ENCODE measurements at regions of chr2 and their contacts with region 1.

Region 1: DNA sequence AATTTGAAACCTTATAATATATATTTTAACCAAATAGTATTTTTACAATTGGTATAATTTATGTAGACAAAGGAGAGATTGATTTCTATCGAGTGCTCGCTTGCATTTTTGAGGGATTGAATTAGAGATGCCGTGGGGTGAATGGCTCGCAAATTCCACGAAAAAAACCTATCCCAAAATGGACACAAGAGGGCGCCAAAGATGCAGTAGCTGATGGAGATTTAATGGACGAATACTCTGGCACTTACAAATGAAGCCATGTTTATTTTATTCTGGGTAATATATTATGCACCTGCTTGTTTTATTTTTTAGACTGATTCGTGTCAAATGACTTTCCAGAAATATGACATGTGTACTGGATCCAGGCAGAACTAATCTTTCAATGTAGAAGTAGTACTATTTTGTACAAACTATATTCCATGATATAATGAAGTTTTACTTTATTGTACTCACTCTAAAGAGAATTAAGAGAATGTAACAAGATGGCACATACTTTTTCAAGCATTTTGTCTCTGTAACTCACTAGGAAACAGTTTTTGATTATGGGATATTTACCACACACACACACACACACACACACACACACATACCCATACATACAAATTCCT is 505.4 kb downstream of the PLCL1 start:
- DNase-seq: peak; percentile 54
- CTCF ChIP-seq: peak; percentile 77

Region 2: GRCh38 chr2:198322294-198322693 is 12.5 kb after region 1 on chr2:
- CTCF ChIA-PET with region 1: interaction called, 15 read pairs
- POLR2A ChIA-PET with region 1: no interaction called
- DNase-seq: no peak
- CTCF ChIP-seq: no peak

Region 3: GRCh38 chr2:198337368-198337767 is 27.6 kb after region 1 on chr2:
- CTCF ChIA-PET with region 1: interaction called, 18 read pairs
- POLR2A ChIA-PET with region 1: no interaction called
- DNase-seq: no peak
- CTCF ChIP-seq: no peak

Region 4: DNA sequence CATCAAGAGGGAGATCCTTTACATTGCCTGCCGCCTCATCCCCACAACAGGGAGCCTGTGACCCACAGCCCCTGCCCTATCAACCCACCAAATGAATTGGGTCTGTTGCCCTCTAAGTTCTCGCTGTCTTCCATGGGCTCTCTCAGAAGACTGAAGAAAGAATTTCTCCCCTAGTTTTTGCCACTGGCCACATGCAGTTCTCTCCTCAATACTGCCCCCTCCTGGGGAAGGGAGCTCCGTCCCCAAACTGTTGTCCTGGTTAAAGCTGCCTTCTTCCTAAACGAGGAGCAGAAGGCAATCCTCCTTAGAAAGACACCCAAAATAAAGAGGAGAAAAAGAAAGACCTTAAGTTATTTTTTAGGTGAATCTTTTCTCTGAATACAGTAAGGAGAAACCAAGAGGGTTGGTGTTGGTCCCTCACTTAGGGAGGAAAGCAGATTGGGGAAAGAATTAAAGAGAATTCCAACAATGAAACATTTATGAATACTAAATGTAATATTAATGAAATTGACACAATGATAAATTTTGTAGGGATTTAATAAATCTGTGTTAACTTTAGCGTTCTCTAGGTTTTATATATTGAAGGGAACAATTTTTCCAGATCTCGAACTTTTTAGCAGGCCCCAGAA is 1179.1 kb after region 1 on chr2:
- CTCF ChIA-PET with region 1: interaction called, 154 read pairs
- POLR2A ChIA-PET with region 1: no interaction called
- DNase-seq: peak; percentile 67
- CTCF ChIP-seq: peak; percentile 81